ENCODE measurements at regions of chr7 and their contacts with region 1.

Region 1: DNA sequence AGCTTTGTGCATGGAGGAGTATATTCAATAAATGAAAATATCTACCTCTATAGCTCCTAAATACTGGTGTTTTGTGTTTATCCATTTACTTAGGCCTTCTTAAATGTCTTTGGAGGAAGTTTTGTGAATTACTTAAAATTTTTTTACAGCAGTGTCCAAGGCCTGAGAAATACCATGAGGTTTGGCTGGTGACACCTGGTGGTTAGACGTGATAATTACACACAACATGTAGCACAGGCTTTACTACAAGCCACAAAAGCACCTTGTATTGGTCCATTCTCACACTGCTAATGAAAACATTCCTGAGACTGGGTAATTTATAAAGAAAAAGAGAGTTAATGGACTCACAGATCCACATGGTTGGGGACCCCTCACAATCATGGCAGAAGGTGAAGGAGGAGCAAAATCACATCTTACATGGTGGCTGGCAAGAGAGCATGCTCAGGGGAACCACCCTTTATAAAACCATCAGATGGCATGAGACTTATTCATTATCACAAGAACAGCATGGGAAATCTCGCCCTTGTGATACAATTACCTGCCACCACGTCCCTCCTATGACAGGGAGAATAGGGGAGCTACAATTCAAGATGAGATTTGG is 20.6 kb downstream of the HYAL4 start:
- DNase-seq: peak; percentile 67
- ATAC-seq: peak; percentile 96
- H3K4me3 ChIP-seq: no peak overlapping the region
- H3K27ac ChIP-seq: no peak overlapping the region
- H3K4me1 ChIP-seq: no peaks in the 10 kb centered on the region
- H3K27me3 ChIP-seq: peaks cover 3% of the 10 kb centered on the region
- CTCF ChIP-seq: peak; percentile 74
- POLR2A ChIP-seq: no peak
- RAD21 ChIP-seq: peak; percentile 69

Region 2: DNA sequence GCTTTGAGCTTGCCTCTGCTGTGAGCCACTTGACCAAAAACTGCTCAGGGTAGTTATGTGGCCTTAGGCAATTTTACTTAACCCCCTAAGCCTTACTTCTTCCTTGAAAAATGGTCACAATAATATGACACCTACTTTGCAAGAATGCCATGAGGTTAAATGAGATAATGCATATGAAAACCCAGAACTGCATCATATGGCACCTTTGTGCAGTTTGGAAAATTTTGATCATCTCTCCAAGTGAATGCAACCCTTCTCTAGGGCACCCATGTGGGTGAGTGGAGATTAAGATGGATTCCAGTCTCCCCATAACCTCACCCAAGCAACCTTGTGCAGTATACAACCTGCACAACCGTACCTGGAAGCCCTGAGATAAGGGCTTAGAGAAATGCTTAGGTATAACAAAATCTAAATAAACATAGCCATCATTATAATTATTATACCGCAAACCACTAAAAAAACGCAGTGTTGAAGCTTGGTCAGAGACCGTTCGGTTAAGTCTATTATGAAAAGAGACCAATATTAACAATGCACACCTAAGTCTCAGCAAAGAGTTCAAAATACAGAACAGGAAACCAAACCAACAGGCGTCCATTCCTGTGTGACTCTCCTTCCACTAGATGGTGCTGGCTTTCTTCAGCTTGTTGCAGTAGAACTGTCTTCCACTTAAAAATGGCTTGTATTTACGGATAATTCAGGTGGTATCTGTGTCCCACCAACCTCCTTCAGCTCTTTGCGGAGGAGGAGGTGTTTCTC is 285.0 kb before region 1 on chr7:
- CTCF ChIA-PET with region 1: interaction called, 5 read pairs
- POLR2A ChIA-PET with region 1: no interaction called
- dilution Hi-C with region 1: no loop called
- in situ Hi-C with region 1: no loop called
- intact Hi-C with region 1: loop called (anchors 1 kb)
- DNase-seq: peak; percentile 42
- ATAC-seq: peak; percentile 92
- H3K4me3 ChIP-seq: no peak overlapping the region
- H3K27ac ChIP-seq: no peak overlapping the region
- H3K4me1 ChIP-seq: no peaks in the 10 kb centered on the region
- H3K27me3 ChIP-seq: no peaks in the 10 kb centered on the region; the same call in none of the 2 replicates
- CTCF ChIP-seq: peak; percentile 60
- POLR2A ChIP-seq: no peak
- RAD21 ChIP-seq: peak; percentile 63

Region 3: DNA sequence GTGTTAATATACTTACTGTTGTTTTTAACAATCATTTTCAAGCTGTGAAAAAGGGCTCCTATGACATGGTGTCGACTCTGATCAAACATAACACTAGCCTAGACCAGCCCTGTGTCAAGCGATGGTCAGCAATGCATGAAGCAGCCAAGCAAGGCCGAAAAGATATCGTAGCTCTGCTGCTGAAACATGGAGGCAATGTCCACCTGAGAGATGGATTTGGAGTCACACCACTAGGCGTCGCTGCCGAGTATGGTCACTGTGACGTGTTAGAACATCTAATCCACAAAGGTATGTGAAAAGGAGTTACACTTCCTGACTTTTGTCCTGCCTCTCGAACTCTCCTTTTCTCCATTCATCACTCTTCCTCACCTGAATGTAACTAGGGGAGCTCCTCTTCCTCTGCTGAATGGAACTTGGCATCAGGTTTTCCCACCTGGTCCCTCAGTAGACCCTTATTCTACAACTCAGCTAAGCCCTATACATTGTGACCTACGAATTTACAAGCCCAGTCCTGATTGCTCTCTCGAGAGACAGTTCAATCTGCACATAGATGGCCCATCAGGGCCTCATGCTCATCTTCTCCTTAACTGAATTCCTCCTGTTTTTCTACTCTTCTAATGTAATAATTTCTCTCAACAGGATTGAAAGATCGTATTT is 241.0 kb before region 1 on chr7:
- CTCF ChIA-PET with region 1: no interaction called
- POLR2A ChIA-PET with region 1: no interaction called
- dilution Hi-C with region 1: no loop called
- in situ Hi-C with region 1: loop called (anchors 25 kb)
- intact Hi-C with region 1: no loop called
- DNase-seq: peak; percentile 25
- ATAC-seq: no peak
- H3K4me3 ChIP-seq: no peak overlapping the region
- H3K27ac ChIP-seq: no peak overlapping the region
- H3K4me1 ChIP-seq: peaks cover 3% of the 10 kb centered on the region; the same call in 1 of the 2 replicates
- H3K27me3 ChIP-seq: no peaks in the 10 kb centered on the region
- CTCF ChIP-seq: peak; percentile 40
- POLR2A ChIP-seq: no peak
- RAD21 ChIP-seq: 0 out of 2 replicates have a peak, but pooled peaks have one; percentile 8

Region 4: GRCh38 chr7:123682690-123683089 is 182.9 kb before region 1 on chr7:
- CTCF ChIA-PET with region 1: interaction called, 5 read pairs
- POLR2A ChIA-PET with region 1: no interaction called
- dilution Hi-C with region 1: no loop called
- in situ Hi-C with region 1: loop called (anchors 5 kb)
- intact Hi-C with region 1: loop called (anchors 1 kb)
- DNase-seq: peak; percentile 77
- ATAC-seq: peak; percentile 74
- H3K4me3 ChIP-seq: no peak overlapping the region
- H3K27ac ChIP-seq: no peak overlapping the region
- H3K4me1 ChIP-seq: 0 out of 2 replicates have a peak, but pooled peaks cover 3% of the 10 kb centered on the region
- H3K27me3 ChIP-seq: no peaks in the 10 kb centered on the region
- CTCF ChIP-seq: peak; percentile 68
- POLR2A ChIP-seq: no peak
- RAD21 ChIP-seq: peak; percentile 68

Region 5: DNA sequence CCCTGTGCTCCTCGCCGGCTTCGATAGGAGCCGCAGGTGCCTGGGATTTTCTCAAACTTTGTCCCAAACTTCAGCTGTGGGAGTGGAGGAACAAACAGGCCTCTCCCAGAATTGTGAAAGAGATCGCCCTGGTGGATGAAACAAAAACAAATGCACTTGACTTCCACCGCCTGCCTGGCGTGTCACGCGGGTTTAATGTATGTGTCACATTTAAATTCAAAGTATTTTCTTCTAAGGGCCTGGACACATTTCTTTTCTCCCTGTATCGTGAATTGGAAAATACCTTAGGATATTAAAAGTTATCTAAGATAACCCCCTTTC is 116.1 kb before region 1 on chr7:
- CTCF ChIA-PET with region 1: no interaction called
- POLR2A ChIA-PET with region 1: no interaction called
- dilution Hi-C with region 1: no loop called
- in situ Hi-C with region 1: no loop called
- intact Hi-C with region 1: no loop called
- DNase-seq: peak; percentile 67
- ATAC-seq: peak; percentile 24
- H3K4me3 ChIP-seq: peak overlapping the region; percentile 74
- H3K27ac ChIP-seq: peak overlapping the region; percentile 89
- H3K4me1 ChIP-seq: peaks cover 2% of the 10 kb centered on the region; the same call in 1 of the 2 replicates
- H3K27me3 ChIP-seq: no peaks in the 10 kb centered on the region
- CTCF ChIP-seq: 0 out of 2 replicates have a peak, but pooled peaks have one; percentile 3
- POLR2A ChIP-seq: no peak
- RAD21 ChIP-seq: no peak

Region 6: GRCh38 chr7:123797673-123798527 is 67.7 kb before region 1 on chr7:
- CTCF ChIA-PET with region 1: interaction called, 5 read pairs
- POLR2A ChIA-PET with region 1: no interaction called
- dilution Hi-C with region 1: no loop called
- in situ Hi-C with region 1: no loop called
- intact Hi-C with region 1: loop called (anchors 2 kb)
- DNase-seq: peak; percentile 78
- ATAC-seq: peak; percentile 77
- H3K4me3 ChIP-seq: no peak overlapping the region
- H3K27ac ChIP-seq: no peak overlapping the region
- H3K4me1 ChIP-seq: peaks cover 2% of the 10 kb centered on the region; the same call in 1 of the 2 replicates
- H3K27me3 ChIP-seq: 0 out of 2 replicates have a peak, but pooled peaks cover under 1% of the 10 kb centered on the region
- CTCF ChIP-seq: peak; percentile 61
- POLR2A ChIP-seq: no peak
- RAD21 ChIP-seq: peak; percentile 61

Measured in IMR-90 (cell line).